ENCODE measurements at regions of chr5 and their contacts with region 1.

Region 1: DNA sequence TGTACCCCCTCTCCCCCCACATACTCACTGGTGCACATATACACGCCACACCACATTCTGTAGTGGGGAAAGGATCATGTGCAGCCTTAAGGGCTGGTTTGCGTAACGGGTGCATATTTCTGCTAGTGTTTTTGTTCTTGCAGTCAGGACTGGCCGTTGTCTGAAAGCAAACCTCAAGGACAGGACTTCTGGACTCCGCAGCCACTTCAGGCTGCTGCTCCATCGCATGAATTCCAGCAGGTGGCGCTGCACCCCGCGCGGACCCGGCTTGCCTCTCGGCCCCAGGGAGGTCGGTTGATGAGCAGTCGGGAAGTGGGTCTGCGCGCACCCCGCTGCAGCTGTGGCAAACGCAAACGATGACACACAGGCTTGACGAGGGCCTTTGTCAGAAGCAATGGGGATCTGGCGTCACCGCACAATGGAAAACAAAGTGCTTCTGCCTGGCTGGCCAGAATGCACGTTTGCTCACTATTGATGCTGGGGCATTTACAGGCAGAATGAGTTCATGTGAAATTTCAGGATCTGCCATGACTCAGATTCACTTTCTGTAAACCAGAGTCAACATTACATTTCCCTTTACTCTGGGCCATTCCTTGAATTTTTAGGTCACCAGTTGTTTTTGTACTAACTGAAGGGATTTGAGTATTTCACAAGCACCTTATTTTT is 36.3 kb upstream of the GLRX start:
- DNase-seq: peak; percentile 89
- H3K4me3 ChIP-seq: peak overlapping the region in 2 of 4 donors; percentile 17
- H3K27ac ChIP-seq: peak overlapping the region; percentile 66 to 79 (median 71)
- H3K4me1 ChIP-seq: peaks cover 9 to 33% (median 18%) of the 10 kb centered on the region in 4 donors
- H3K27me3 ChIP-seq: no peaks in the 10 kb centered on the region
- CTCF ChIP-seq: peak; percentile 98 to 99 (median 98)
- EP300 ChIP-seq: peak; percentile 73
- POLR2A ChIP-seq: no peak

Region 2: DNA sequence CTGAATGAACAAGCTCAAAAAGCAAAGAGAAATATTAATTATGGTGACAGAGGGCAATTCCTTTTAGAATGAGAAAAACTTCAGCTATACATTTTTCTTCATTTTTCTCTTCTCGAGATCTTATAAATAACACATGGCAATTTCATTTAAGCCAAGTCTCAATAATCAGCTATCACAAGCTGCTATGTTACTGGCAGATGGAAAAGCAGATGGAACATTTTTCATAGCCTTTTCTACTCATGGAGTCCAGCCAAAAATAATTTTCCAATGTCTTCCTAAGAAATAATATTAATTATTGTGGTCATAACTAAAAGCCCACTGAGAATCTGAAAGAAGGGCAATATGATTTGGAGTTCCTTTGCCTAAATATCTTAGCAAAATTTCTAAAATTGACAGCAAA is 339.6 kb before region 1 on chr5:
- in situ Hi-C with region 1: no loop called
- intact Hi-C with region 1: no loop called
- DNase-seq: no peak
- H3K4me3 ChIP-seq: no peak overlapping the region
- H3K27ac ChIP-seq: no peak overlapping the region
- H3K4me1 ChIP-seq: peaks cover 0 to 1% (median 0%) of the 10 kb centered on the region in 4 donors
- H3K27me3 ChIP-seq: no peaks in the 10 kb centered on the region
- CTCF ChIP-seq: no peak
- EP300 ChIP-seq: no peak
- POLR2A ChIP-seq: no peak

Region 3: GRCh38 chr5:95961617-95962474 is 103.1 kb after region 1 on chr5 and contains the start of gene ELL2:
- in situ Hi-C with region 1: loop called in 2 of 4 experiments (anchors 25 kb)
- intact Hi-C with region 1: no loop called
- DNase-seq: peak; percentile 100
- H3K4me3 ChIP-seq: peak within 1 kb of the TSS; percentile 86 to 95 (median 93)
- H3K27ac ChIP-seq: peak within 1 kb of the TSS; percentile 98 to 100 (median 99)
- H3K4me1 ChIP-seq: peaks cover 3 to 40% (median 25%) of the 10 kb centered on the region in 4 donors
- H3K27me3 ChIP-seq: no peaks in the 10 kb centered on the region
- CTCF ChIP-seq: no peak
- EP300 ChIP-seq: peak; percentile 99
- POLR2A ChIP-seq: peak; percentile 98
- total RNA-seq, gene ELL2: 5.8 to 46.8 (median 19.7) TPM

Region 4: DNA sequence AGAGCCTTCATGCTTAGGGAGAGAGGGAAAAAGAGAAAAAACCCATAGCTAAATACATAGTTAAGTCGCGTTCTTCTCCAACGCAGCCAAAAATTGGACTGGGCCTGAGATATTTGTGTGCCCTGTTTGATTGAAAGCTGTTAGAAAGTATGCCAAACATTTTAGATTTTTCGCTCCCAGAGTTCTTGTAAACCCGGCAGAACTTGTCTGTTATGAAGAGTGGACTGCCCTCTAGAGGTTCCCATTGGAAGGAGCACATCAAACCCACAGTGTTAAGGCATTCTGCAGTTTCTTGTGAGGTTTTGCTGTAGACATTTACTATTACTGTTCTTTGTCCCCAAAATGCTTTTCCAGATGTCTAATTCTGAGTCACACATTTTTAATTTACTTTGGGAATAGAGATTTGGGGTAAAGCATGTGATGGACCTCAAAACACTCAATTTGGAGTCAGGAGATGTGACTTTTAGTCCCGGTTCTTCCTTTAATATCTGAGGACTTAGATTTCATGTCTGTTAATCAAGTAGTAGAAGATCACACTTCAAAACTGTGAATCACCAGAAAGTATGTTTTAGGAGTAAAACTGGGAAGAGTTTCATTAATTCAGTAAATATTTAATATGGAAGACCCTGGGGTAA is 477.7 kb after region 1 on chr5:
- in situ Hi-C with region 1: loop called (anchors 5 to 25 kb)
- intact Hi-C with region 1: loop called (anchors 5 kb)
- DNase-seq: peak; percentile 79
- H3K4me3 ChIP-seq: no peak overlapping the region
- H3K27ac ChIP-seq: peak overlapping the region in 3 of 4 donors; percentile 6 to 28 (median 9)
- H3K4me1 ChIP-seq: peaks cover 0 to 41% (median 19%) of the 10 kb centered on the region in 4 donors
- H3K27me3 ChIP-seq: no peaks in the 10 kb centered on the region
- CTCF ChIP-seq: peak; percentile 79 to 91 (median 86)
- EP300 ChIP-seq: no peak
- POLR2A ChIP-seq: no peak

Region 5: DNA sequence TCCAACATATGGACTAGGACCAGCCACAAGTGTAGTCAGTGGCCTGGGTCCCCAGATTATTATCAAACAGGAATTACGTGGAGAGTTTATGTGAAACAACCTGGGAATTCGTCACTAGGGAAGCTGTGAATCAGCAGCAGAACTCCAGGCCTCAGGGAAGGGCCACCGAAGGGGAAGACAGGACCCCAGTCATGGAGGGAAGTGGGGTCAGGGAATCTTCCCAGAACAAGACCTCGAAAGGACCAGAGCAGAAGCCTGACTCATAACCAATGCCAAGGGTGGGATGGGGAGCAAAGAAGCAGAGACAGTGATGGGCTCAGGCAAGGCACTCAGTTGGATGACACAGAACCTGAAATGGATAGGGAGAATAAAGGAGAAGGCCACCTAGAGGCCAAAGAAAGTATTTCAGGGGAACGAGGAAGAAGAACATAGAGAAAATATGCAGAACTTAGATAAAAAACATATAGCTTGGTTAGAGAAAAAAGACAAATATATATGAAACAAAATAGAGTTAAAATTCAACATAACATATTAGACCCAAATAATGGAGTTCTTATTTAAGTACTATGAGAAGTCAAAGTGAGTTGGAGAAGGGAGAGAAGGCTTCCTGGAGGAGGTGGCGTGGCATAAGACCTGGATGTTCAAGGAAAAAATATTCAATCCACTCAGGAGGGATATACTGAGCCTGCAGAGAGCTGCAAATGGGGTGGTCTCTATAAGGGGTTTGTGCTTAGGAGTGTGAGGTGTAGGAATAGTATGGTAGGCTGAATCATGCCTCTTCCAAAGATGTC is 736.7 kb after region 1 on chr5:
- in situ Hi-C with region 1: loop called (anchors 5 to 25 kb)
- intact Hi-C with region 1: loop called (anchors 10 kb)
- DNase-seq: no peak
- H3K4me3 ChIP-seq: no peak overlapping the region
- H3K27ac ChIP-seq: no peak overlapping the region
- H3K4me1 ChIP-seq: peaks cover 0 to 8% (median 2%) of the 10 kb centered on the region in 4 donors
- H3K27me3 ChIP-seq: no peaks in the 10 kb centered on the region
- CTCF ChIP-seq: peak; percentile 33 to 55 (median 39)
- EP300 ChIP-seq: no peak
- POLR2A ChIP-seq: no peak

Region 6: GRCh38 chr5:96601811-96602244 is 743.0 kb after region 1 on chr5:
- in situ Hi-C with region 1: loop called (anchors 5 to 25 kb)
- intact Hi-C with region 1: loop called (anchors 10 kb)
- DNase-seq: peak; percentile 33
- H3K4me3 ChIP-seq: no peak overlapping the region
- H3K27ac ChIP-seq: no peak overlapping the region
- H3K4me1 ChIP-seq: no peaks in the 10 kb centered on the region
- H3K27me3 ChIP-seq: no peaks in the 10 kb centered on the region
- CTCF ChIP-seq: peak; percentile 77 to 86 (median 83)
- EP300 ChIP-seq: no peak
- POLR2A ChIP-seq: no peak

Region 7: DNA sequence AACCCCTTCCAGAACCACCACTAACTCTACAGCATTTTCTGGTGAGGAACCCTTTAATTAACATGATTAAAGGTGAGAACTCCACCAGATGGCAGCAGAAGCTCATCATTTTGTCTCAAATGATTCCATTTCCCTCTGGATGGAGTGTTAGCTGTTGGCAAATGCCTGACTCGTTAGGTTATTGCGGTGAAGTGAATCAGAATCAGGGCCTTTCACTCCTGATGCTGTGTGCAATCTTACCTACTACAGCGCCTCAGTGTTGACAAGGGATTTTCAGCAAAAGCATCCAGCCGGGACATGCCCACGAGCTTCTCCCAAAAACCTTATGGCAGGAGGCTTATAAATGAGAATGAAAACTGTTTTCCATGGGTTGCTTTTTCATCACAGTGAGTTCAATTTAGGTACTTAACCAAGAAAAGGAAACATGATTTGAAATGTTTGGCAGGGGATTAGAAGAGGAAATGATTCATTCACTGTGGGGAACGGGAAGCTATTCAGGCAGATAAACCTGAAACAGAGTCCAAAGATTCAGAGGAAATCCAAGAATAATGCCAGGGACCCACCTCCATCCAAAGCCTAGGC is 755.4 kb after region 1 on chr5:
- in situ Hi-C with region 1: loop called in 2 of 4 experiments (anchors 10 kb)
- intact Hi-C with region 1: loop called (anchors 10 kb)
- DNase-seq: peak; percentile 60
- H3K4me3 ChIP-seq: no peak overlapping the region
- H3K27ac ChIP-seq: peak overlapping the region; percentile 10 to 59 (median 50)
- H3K4me1 ChIP-seq: peaks cover 0 to 19% (median 9%) of the 10 kb centered on the region in 4 donors
- H3K27me3 ChIP-seq: no peaks in the 10 kb centered on the region
- CTCF ChIP-seq: peak; percentile 51 to 79 (median 55)
- EP300 ChIP-seq: no peak
- POLR2A ChIP-seq: no peak

Measured in transverse colon (tissue), 4 donors.